ENCODE measurements at regions of chr7 and their contacts with region 1.

Region 1: GRCh38 chr7:21507626-21508343 is 35.1 kb upstream of the DNAH11 start:
- DNase-seq: peak; percentile 42
- ATAC-seq: peak; percentile 95
- H3K4me3 ChIP-seq: no peak overlapping the region
- H3K27ac ChIP-seq: no peak overlapping the region
- H3K4me1 ChIP-seq: no peaks in the 10 kb centered on the region
- H3K27me3 ChIP-seq: no peaks in the 10 kb centered on the region
- CTCF ChIP-seq: peak; percentile 80
- POLR2A ChIP-seq: no peak
- RAD21 ChIP-seq: peak; percentile 89

Region 2: DNA sequence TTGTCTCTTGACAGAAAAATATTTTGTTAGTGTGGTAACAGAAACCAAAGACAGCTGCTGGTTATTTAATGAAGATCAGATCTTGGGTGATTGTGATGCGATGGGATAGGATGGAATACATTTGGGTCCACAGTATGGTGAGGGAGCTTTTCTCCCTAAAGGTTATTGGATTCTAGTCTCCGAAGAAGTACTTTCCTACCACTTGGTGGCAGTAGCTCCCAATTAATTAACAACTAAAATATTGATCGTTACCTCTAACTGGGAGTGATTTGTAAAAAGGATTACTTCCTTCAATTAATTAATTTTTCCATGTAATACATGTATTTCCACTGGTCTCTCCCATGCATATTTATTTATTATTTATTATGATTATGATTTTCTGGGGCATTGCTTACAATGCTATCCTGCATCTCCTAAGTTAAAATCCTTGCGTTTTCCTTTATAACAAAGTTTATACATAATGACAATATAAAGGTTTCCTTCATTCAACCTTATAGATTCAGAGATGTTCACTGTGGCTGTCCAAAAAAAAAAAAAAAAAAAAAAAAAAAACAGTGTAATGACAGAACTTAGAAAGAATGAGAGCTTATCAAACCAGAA is 1759.9 kb before region 1 on chr7:
- CTCF ChIA-PET with region 1: no interaction called
- POLR2A ChIA-PET with region 1: no interaction called
- dilution Hi-C with region 1: no loop called
- in situ Hi-C with region 1: no loop called
- intact Hi-C with region 1: loop called (anchors 5 kb)
- DNase-seq: peak; percentile 22
- ATAC-seq: peak; percentile 56
- H3K4me3 ChIP-seq: no peak overlapping the region
- H3K27ac ChIP-seq: no peak overlapping the region
- H3K4me1 ChIP-seq: no peaks in the 10 kb centered on the region
- H3K27me3 ChIP-seq: no peaks in the 10 kb centered on the region
- CTCF ChIP-seq: peak; percentile 59
- POLR2A ChIP-seq: no peak
- RAD21 ChIP-seq: peak; percentile 55

Region 3: DNA sequence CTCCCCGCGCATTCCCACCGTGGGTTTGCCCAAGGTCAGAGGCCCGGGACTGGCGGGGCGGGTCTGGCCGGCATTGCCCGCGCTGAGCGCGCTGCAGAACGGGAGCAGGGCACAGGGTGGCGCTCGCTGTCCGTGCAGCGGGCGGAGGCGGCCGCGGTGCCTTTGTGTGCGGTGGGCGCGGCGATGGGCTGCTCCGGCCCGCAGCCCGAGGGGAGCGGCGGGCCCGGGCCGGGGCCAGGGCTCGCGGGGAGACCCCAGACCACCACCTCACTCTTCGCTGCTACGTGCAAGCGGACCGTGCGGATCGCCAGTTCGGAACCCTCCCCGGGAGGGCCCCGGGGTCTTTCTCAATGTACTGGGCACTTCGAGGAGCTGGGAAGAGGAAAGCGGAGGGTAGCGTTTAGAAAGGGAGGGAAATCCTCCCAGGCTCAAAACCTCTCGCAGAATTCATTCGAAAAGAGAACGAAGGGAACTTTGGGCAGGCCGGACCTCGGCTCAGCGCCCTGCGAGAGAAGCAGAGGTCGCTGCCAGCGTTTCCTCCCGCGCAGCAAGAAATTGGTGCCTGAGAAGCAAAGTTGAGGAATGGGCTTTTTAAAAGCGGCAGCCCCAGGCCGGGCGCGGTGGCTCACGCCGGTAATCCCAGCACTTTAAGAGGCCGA is 729.6 kb before region 1 on chr7:
- CTCF ChIA-PET with region 1: no interaction called
- POLR2A ChIA-PET with region 1: no interaction called
- dilution Hi-C with region 1: no loop called
- in situ Hi-C with region 1: loop called (anchors 10 kb)
- intact Hi-C with region 1: loop called (anchors 1 kb)
- DNase-seq: no peak
- ATAC-seq: peak; percentile 98
- H3K4me3 ChIP-seq: peak overlapping the region; percentile 20
- H3K27ac ChIP-seq: no peak overlapping the region
- H3K4me1 ChIP-seq: no peaks in the 10 kb centered on the region
- H3K27me3 ChIP-seq: peaks cover 45% of the 10 kb centered on the region
- CTCF ChIP-seq: peak; percentile 52
- POLR2A ChIP-seq: no peak
- RAD21 ChIP-seq: peak; percentile 64

Region 4: DNA sequence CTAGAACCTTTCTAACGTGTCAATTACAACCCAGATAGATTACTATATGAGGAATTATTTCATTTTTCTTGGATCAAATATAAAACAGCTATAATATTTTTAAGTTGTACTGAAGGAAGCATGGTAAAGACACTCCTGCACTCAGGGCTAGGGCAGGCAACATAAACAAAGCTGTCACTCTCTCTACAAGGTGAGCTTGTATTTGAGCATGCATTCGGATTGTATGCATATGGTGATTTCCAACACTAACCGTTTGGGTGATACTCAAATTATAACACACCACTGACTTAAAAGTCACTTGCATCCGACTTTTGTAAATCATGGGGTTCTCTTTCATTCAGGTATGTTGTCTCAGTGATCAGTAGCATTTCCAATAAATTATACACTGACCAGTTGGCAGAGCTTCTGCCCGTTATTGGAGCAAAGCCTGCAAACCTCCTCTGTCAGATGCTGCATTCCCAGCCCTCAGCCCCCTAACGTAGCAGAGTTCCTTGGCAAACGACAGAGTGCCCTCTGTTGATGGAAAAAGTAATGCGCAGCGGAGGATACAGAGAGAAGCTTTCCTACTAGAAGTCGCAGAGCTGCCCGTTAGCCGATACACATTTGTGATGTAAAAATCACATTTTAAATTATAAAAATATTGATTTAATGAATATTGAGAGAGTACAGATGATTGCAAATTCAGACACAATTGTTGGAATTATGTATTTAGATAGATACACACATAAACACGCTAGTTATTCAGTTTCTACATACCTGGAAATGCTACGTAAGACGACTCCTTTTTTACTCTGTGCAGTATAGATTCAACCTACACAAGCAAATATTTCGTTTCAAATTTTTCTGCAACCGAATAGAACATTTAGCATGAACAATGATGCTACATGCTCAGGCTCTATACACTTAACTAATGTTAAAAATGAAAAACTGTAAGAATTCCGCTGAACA is 253.8 kb before region 1 on chr7:
- CTCF ChIA-PET with region 1: interaction called, 6 read pairs
- POLR2A ChIA-PET with region 1: no interaction called
- dilution Hi-C with region 1: no loop called
- in situ Hi-C with region 1: loop called (anchors 5 kb)
- intact Hi-C with region 1: loop called (anchors 1 kb)
- DNase-seq: peak; percentile 26
- ATAC-seq: peak; percentile 69; the same call in 1 of the 2 replicates
- H3K4me3 ChIP-seq: no peak overlapping the region
- H3K27ac ChIP-seq: no peak overlapping the region
- H3K4me1 ChIP-seq: no peaks in the 10 kb centered on the region
- H3K27me3 ChIP-seq: no peaks in the 10 kb centered on the region
- CTCF ChIP-seq: peak; percentile 51
- POLR2A ChIP-seq: no peak
- RAD21 ChIP-seq: peak; percentile 34; the same call in 1 of the 2 replicates

Region 5: GRCh38 chr7:21261627-21262594 is 245.9 kb before region 1 on chr7:
- CTCF ChIA-PET with region 1: interaction called, 6 read pairs
- POLR2A ChIA-PET with region 1: no interaction called
- dilution Hi-C with region 1: no loop called
- in situ Hi-C with region 1: loop called (anchors 5 kb)
- intact Hi-C with region 1: loop called (anchors 1 kb)
- DNase-seq: peak; percentile 18
- ATAC-seq: peak; percentile 48; the same call in 1 of the 2 replicates
- H3K4me3 ChIP-seq: no peak overlapping the region
- H3K27ac ChIP-seq: no peak overlapping the region
- H3K4me1 ChIP-seq: no peaks in the 10 kb centered on the region
- H3K27me3 ChIP-seq: no peaks in the 10 kb centered on the region
- CTCF ChIP-seq: peak; percentile 46
- POLR2A ChIP-seq: no peak
- RAD21 ChIP-seq: peak; percentile 50

Region 6: GRCh38 chr7:21427182-21427870 is 80.5 kb before region 1 on chr7:
- CTCF ChIA-PET with region 1: no interaction called
- POLR2A ChIA-PET with region 1: no interaction called
- dilution Hi-C with region 1: no loop called
- in situ Hi-C with region 1: no loop called
- intact Hi-C with region 1: loop called (anchors 5 kb)
- DNase-seq: peak; percentile 97
- ATAC-seq: peak; percentile 82
- H3K4me3 ChIP-seq: peak overlapping the region; percentile 61
- H3K27ac ChIP-seq: peak overlapping the region; percentile 22; the same call in 1 of the 2 replicates
- H3K4me1 ChIP-seq: peaks cover 4% of the 10 kb centered on the region; the same call in 1 of the 2 replicates
- H3K27me3 ChIP-seq: no peaks in the 10 kb centered on the region
- CTCF ChIP-seq: no peak
- POLR2A ChIP-seq: peak; percentile 76
- RAD21 ChIP-seq: no peak

Region 7: GRCh38 chr7:21523779-21524178 is 16.0 kb after region 1 on chr7:
- CTCF ChIA-PET with region 1: no interaction called
- POLR2A ChIA-PET with region 1: no interaction called
- dilution Hi-C with region 1: no loop called
- in situ Hi-C with region 1: no loop called
- intact Hi-C with region 1: no loop called
- DNase-seq: no peak
- ATAC-seq: no peak
- H3K4me3 ChIP-seq: no peak overlapping the region
- H3K27ac ChIP-seq: no peak overlapping the region
- H3K4me1 ChIP-seq: no peaks in the 10 kb centered on the region
- H3K27me3 ChIP-seq: no peaks in the 10 kb centered on the region
- CTCF ChIP-seq: no peak
- POLR2A ChIP-seq: no peak
- RAD21 ChIP-seq: no peak

Region 8: GRCh38 chr7:22001345-22002004 is 493.7 kb after region 1 on chr7:
- CTCF ChIA-PET with region 1: no interaction called
- POLR2A ChIA-PET with region 1: no interaction called
- dilution Hi-C with region 1: no loop called
- in situ Hi-C with region 1: no loop called
- intact Hi-C with region 1: loop called (anchors 2 kb)
- DNase-seq: peak; percentile 80
- ATAC-seq: peak; percentile 98
- H3K4me3 ChIP-seq: no peak overlapping the region
- H3K27ac ChIP-seq: no peak overlapping the region
- H3K4me1 ChIP-seq: 0 out of 2 replicates have a peak, but pooled peaks cover 3% of the 10 kb centered on the region
- H3K27me3 ChIP-seq: no peaks in the 10 kb centered on the region; the same call in 1 of the 2 replicates
- CTCF ChIP-seq: peak; percentile 88
- POLR2A ChIP-seq: no peak
- RAD21 ChIP-seq: peak; percentile 91